BJ (cell line): ENCODE measurements at regions of chr18 and their contacts with region 1.

Region 1: GRCh38 chr18:21179590-21180220 is 62.3 kb upstream of the GREB1L start:
- DNase-seq: no peak
- H3K4me3 ChIP-seq: no peak overlapping the region
- H3K27me3 ChIP-seq: no peaks in the 10 kb centered on the region; the same call in 1 of the 2 replicates
- CTCF ChIP-seq: peak; percentile 81

Region 2: GRCh38 chr18:20971886-20972267 is 207.8 kb before region 1 on chr18:
- CTCF ChIA-PET with region 1: interaction called, 19 read pairs
- POLR2A ChIA-PET with region 1: no interaction called
- DNase-seq: no peak
- H3K4me3 ChIP-seq: no peak overlapping the region
- H3K27me3 ChIP-seq: no peaks in the 10 kb centered on the region
- CTCF ChIP-seq: peak; percentile 60

Region 3: GRCh38 chr18:21111341-21112139 is 68.2 kb before region 1 on chr18 and contains the start of gene ROCK1:
- CTCF ChIA-PET with region 1: interaction called, 14 read pairs
- POLR2A ChIA-PET with region 1: no interaction called
- DNase-seq: peak; percentile 84
- H3K4me3 ChIP-seq: peak within 1 kb of the TSS; percentile 96
- H3K27me3 ChIP-seq: no peaks in the 10 kb centered on the region
- CTCF ChIP-seq: no peak
- polyA plus RNA-seq, gene ROCK1: 11.8 and 27.6 TPM in 2 replicates

Region 4: GRCh38 chr18:21163647-21164547 is 15.8 kb before region 1 on chr18:
- CTCF ChIA-PET with region 1: interaction called, 21 read pairs
- POLR2A ChIA-PET with region 1: no interaction called
- DNase-seq: peak; percentile 79
- H3K4me3 ChIP-seq: no peak overlapping the region
- H3K27me3 ChIP-seq: no peaks in the 10 kb centered on the region
- CTCF ChIP-seq: no peak